ENCODE measurements at regions of chr12 and their contacts with region 1.

Region 1: DNA sequence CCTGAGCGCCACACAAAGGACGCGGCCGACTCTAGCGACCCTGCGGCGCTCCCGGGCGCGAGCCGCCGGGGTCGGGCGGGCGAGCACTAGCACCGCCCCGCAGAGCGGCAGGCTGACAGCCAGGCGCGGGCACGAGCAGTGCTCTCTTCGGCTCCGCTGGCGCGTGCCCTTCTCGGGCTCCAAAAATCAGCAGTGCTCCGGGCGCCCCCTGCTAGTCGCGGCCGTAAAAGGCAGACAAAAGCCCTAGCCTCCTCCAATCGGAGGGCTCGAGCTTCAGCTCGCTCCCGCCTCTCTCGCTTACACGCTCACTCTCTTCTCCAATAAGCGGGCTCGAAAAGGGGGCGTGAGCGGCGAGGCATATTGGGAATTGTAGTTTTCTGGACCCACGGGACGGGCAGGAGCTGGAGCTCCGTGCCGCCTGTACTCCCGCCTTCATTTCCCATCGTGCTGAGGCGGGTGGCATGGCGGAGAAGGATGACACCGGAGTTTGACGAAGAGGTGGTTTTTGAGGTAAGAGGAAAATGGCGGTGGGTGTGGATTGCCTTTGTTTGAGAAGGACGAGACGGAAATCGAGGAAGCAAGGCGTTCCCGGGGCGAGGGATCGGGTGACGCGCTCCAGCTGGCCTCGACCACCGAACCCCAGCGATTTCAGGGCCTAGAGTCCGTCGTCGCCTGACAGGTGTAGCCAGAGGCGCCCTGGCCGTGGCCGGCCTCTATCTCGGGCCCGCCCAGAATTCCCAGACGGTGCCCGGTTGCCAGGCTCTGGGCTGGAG is at the starts of genes FGD6 and VEZT:
- DNase-seq: peak; percentile 98
- H3K4me3 ChIP-seq: peak within 1 kb of the TSS; percentile 95
- H3K27ac ChIP-seq: peak within 1 kb of the TSS; percentile 77
- H3K4me1 ChIP-seq: peaks cover 53% of the 10 kb centered on the region
- H3K27me3 ChIP-seq: no peaks in the 10 kb centered on the region
- CTCF ChIP-seq: peak; percentile 68
- total RNA-seq, gene FGD6: 18.1 and 22.0 TPM in 2 replicates
- total RNA-seq, gene VEZT: 35.2 and 46.8 TPM in 2 replicates

Region 2: GRCh38 chr12:95117178-95117599 is 100.4 kb before region 1 on chr12:
- CTCF ChIA-PET with region 1: interaction called, 7 read pairs
- POLR2A ChIA-PET with region 1: interaction called, 5 read pairs
- intact Hi-C with region 1: loop called (anchors 1 kb)
- DNase-seq: peak in 1 of 2 experiments; percentile 48
- H3K4me3 ChIP-seq: peak overlapping the region; percentile 43; the same call in 1 of the 2 replicates
- H3K27ac ChIP-seq: peak overlapping the region; percentile 92
- H3K4me1 ChIP-seq: peaks cover 43% of the 10 kb centered on the region
- H3K27me3 ChIP-seq: no peaks in the 10 kb centered on the region
- CTCF ChIP-seq: peak; percentile 94

Region 3: DNA sequence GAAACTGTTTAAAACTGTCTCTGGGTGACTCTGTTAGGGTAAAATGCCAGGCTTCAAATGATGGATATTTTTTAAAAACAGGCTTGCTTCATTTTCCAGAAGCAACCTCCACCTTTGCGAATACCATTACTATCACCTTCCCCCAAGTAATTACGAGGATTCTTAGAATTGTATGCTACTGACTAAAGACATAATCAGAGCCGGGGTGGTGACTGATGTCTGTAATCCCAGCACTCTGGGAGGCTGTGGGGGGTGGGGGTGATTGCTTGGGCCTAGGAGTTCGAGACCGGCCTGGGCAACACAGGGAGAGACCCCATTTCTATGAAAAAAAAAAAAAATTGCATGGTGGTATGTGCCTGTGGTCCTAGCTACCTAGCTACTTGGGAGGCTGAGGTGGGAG is 38.5 kb before region 1 on chr12:
- CTCF ChIA-PET with region 1: no interaction called
- POLR2A ChIA-PET with region 1: no interaction called
- intact Hi-C with region 1: loop called (anchors 2 kb)
- DNase-seq: no peak
- H3K4me3 ChIP-seq: no peak overlapping the region
- H3K27ac ChIP-seq: peak overlapping the region; percentile 11; the same call in 1 of the 2 replicates
- H3K4me1 ChIP-seq: peaks cover 17% of the 10 kb centered on the region
- H3K27me3 ChIP-seq: no peaks in the 10 kb centered on the region
- CTCF ChIP-seq: no peak

Region 4: DNA sequence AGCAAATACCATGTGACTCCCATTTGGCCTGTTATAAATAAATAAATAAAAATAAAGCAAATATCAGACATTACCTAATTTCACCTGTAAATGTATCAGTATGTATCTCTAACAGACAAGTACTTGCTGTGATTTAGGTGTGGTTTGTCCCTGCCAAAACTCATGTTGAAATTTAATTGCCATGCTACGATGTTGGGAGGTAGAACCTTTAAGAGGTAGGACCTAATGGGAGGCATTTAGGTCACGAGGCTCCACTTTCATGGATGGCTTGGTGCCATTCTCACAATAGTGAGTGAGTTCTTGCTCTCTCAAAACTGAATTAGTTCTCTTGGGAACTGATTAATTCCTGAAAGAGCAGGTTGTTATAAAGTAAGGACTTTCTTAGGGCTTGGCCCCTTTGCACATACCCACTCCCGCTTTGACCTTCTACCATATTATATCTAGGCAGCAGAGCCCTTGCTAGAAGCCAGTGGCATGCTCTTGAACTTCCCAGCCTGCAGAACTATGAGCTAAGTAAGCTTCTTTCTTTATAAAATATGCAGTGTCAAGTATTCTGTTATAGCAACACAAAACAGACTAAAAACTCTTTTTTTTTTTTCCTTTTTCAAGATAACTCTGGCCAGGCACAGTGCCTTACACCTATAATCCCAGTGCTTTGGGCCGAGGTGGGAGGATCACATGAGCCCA is 26.1 kb after region 1 on chr12:
- CTCF ChIA-PET with region 1: interaction called, 4 read pairs
- POLR2A ChIA-PET with region 1: interaction called, 15 read pairs
- intact Hi-C with region 1: no loop called
- DNase-seq: no peak
- H3K4me3 ChIP-seq: no peak overlapping the region
- H3K27ac ChIP-seq: no peak overlapping the region
- H3K4me1 ChIP-seq: no peaks in the 10 kb centered on the region
- H3K27me3 ChIP-seq: no peaks in the 10 kb centered on the region
- CTCF ChIP-seq: no peak

Region 5: DNA sequence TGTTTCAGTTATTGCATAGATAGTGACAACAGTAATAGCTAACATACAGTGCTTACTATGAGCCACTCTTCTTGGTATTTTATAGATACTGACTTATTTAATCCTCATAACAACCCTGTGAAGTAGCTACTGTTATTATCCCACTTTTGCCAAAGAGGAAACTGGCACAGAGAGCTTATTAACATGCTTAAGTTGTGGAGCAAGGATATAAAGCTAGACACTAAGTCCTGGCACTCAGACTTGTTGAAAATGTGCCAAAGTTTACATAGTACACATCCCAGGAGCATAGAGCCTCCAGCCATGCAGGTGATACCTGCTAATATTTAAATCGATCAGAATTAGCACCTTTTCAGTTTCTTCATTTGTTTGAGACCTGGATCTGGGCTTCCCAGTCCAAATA is 41.8 kb after region 1 on chr12:
- CTCF ChIA-PET with region 1: no interaction called
- POLR2A ChIA-PET with region 1: no interaction called
- intact Hi-C with region 1: no loop called
- DNase-seq: no peak
- H3K4me3 ChIP-seq: no peak overlapping the region
- H3K27ac ChIP-seq: no peak overlapping the region
- H3K4me1 ChIP-seq: no peaks in the 10 kb centered on the region
- H3K27me3 ChIP-seq: no peaks in the 10 kb centered on the region
- CTCF ChIP-seq: no peak

Region 6: DNA sequence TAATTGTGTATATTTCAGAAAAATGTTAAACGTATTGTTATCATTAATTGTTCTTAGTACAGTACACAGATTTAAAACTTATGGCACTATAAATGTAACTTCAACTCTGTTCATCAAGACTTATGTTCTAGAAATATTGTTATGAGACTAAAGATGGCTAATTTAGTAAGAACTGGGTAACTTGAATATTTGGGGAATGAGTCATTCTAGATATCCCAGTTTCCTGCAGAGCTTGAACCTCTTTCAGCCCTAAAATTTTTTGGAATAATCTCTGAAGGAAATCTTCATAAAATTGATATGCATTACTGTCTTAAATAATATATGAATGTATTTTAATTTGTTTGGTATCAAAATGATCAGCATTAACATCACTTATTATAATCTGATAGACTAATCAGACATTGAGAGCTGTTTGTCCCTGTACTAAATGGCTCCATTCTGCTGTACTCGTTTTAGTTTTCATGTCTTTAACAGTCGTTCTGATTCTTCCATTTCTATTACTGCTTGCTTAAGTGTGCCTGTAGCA is 87.2 kb after region 1 on chr12:
- CTCF ChIA-PET with region 1: no interaction called
- POLR2A ChIA-PET with region 1: no interaction called
- intact Hi-C with region 1: no loop called
- DNase-seq: no peak
- H3K4me3 ChIP-seq: no peak overlapping the region
- H3K27ac ChIP-seq: no peak overlapping the region; the same call in 1 of the 2 replicates
- H3K4me1 ChIP-seq: peaks cover 26% of the 10 kb centered on the region
- H3K27me3 ChIP-seq: no peaks in the 10 kb centered on the region
- CTCF ChIP-seq: no peak

Region 7: DNA sequence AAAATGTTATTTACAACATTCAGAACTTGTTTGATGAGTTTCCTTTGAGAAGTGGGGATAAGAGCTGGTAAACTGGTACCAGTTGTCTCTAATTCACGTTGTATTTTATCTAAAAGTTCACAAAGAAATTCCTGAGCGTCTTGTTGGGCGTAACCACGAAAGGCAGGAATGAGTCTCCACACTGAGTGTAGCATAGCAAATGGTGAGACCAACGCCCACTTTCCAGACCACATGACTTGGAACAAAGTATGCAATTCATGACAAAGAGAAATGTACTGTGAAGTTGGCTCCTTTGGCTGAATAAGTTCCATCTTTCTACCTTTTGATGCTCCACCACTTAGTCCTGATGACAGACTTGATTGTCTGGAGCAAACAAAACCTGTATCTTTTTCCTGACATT is 315.3 kb after region 1 on chr12:
- CTCF ChIA-PET with region 1: interaction called, 3 read pairs
- POLR2A ChIA-PET with region 1: no interaction called
- intact Hi-C with region 1: loop called (anchors 5 kb)
- DNase-seq: no peak
- H3K4me3 ChIP-seq: no peak overlapping the region
- H3K27ac ChIP-seq: no peak overlapping the region
- H3K4me1 ChIP-seq: no peaks in the 10 kb centered on the region
- H3K27me3 ChIP-seq: no peaks in the 10 kb centered on the region
- CTCF ChIP-seq: no peak

Measured in PC-9 (cell line).